ENCODE measurements at regions of chr5 and their contacts with region 1.

Region 1: GRCh38 chr5:54243473-54244080 is 66.8 kb downstream of the ARL15 start:
- DNase-seq: peak in 4 of 9 experiments; percentile 17 to 55 (median 41)
- ATAC-seq: no peak
- H3K4me3 ChIP-seq: no peak overlapping the region
- H3K4me3 Mint-ChIP-seq: no peak overlapping the region
- H3K27ac ChIP-seq: no peak overlapping the region
- H3K27ac Mint-ChIP-seq: no peak overlapping the region
- H3K4me1 ChIP-seq: no peaks in the 10 kb centered on the region
- H3K4me1 Mint-ChIP-seq: peaks cover 11% of the 10 kb centered on the region
- H3K27me3 ChIP-seq: no peaks in the 10 kb centered on the region
- H3K27me3 Mint-ChIP-seq: no peaks in the 10 kb centered on the region
- CTCF ChIP-seq: peak; percentile 76

Region 2: GRCh38 chr5:54254482-54255198 is 11.1 kb after region 1 on chr5:
- CTCF ChIA-PET with region 1: interaction called, 18 read pairs
- POLR2A ChIA-PET with region 1: no interaction called
- intact Hi-C with region 1: no loop called
- DNase-seq: no peak
- ATAC-seq: no peak
- H3K4me3 ChIP-seq: no peak overlapping the region
- H3K4me3 Mint-ChIP-seq: no peak overlapping the region
- H3K27ac ChIP-seq: no peak overlapping the region
- H3K27ac Mint-ChIP-seq: no peak overlapping the region
- H3K4me1 ChIP-seq: no peaks in the 10 kb centered on the region
- H3K4me1 Mint-ChIP-seq: peaks cover 37% of the 10 kb centered on the region
- H3K27me3 ChIP-seq: no peaks in the 10 kb centered on the region
- H3K27me3 Mint-ChIP-seq: no peaks in the 10 kb centered on the region
- CTCF ChIP-seq: no peak

Region 3: DNA sequence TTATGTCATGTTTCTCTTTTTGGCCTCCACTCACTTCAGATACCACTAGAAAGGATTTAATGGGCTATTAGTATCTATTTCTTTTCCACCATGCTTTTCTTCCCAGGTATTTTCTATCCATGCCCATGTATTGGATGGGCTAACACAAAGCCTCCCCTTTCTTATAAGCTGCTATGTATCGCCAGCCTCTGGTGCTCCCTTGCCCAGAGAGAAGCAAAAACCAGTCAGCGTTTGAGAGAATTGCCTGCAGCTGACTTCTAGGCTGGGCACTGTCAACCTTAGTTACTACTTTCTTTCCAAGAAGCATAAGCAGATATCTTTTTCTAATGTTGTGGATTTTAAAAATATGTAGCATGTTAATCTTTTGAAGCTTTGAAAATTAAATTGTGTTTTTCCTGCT is 181.7 kb after region 1 on chr5:
- CTCF ChIA-PET with region 1: interaction called, 24 read pairs
- POLR2A ChIA-PET with region 1: no interaction called
- intact Hi-C with region 1: no loop called
- DNase-seq: no peak
- ATAC-seq: no peak
- H3K4me3 ChIP-seq: no peak overlapping the region
- H3K4me3 Mint-ChIP-seq: no peak overlapping the region
- H3K27ac ChIP-seq: no peak overlapping the region
- H3K27ac Mint-ChIP-seq: no peak overlapping the region
- H3K4me1 ChIP-seq: no peaks in the 10 kb centered on the region
- H3K4me1 Mint-ChIP-seq: no peaks in the 10 kb centered on the region
- H3K27me3 ChIP-seq: peaks cover 0 to 3% of the 10 kb centered on the region in 2 experiments
- H3K27me3 Mint-ChIP-seq: peaks cover 19% of the 10 kb centered on the region
- CTCF ChIP-seq: no peak

Region 4: DNA sequence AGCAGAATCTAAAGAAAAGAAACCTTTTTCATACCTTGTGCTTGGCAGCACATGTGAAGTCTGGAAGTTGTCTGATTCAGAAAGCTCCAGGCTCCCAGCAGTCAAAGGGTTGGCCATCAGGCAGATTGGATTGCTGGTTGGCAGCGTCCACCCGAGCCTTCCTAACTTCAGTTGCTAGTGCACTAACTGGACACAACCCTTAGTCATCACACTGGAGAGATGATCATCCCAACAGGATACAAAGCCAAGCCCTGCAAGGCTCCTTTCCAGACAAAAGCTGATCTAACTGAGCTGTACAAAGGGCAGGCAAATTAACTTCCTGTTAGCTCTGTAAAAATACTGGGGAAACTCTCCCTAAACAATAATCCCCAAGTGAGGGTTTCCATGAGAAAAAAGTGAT is 459.6 kb after region 1 on chr5:
- CTCF ChIA-PET with region 1: no interaction called
- POLR2A ChIA-PET with region 1: no interaction called
- intact Hi-C with region 1: no loop called
- DNase-seq: no peak
- ATAC-seq: no peak
- H3K4me3 ChIP-seq: no peak overlapping the region
- H3K4me3 Mint-ChIP-seq: no peak overlapping the region
- H3K27ac ChIP-seq: no peak overlapping the region
- H3K27ac Mint-ChIP-seq: no peak overlapping the region
- H3K4me1 ChIP-seq: no peaks in the 10 kb centered on the region
- H3K4me1 Mint-ChIP-seq: peaks cover 2% of the 10 kb centered on the region
- H3K27me3 ChIP-seq: no peaks in the 10 kb centered on the region
- H3K27me3 Mint-ChIP-seq: no peaks in the 10 kb centered on the region
- CTCF ChIP-seq: no peak

Region 5: DNA sequence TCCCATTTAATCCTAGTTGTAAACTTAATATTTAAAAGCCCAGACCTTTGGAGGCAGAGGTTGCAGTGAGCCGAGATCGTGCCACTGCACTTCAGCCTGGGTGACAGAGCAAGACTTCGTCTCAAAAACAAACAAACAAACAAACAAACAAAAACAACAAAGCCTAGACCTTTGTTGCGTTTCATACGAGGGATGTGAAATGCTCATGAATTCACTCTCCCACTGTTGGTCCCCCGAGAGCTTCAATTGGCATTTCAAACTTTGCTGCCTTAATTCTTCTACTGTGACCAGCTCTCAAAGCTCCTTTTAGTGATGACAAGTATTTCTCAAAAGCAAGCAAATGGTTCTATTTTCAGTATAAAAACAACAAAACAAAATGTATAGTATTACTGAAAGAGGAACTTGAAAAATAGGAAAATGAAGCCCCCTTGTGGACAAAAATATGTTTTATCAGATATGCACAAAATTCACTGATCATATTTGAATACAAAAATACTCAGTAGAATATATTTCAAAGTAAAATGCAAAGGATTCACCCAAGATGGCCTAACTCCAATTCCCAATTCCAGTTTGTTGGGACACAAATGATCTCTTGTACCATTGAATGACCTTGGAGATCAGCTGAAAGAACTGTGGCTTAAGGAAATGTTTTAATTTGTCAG is 601.5 kb after region 1 on chr5:
- CTCF ChIA-PET with region 1: interaction called, 5 read pairs
- POLR2A ChIA-PET with region 1: no interaction called
- intact Hi-C with region 1: loop called in 1 of 2 experiments (anchors 5 kb)
- DNase-seq: peak in 2 of 9 experiments; percentile 59 to 70
- ATAC-seq: no peak
- H3K4me3 ChIP-seq: no peak overlapping the region
- H3K4me3 Mint-ChIP-seq: peak overlapping the region; percentile 55
- H3K27ac ChIP-seq: no peak overlapping the region
- H3K27ac Mint-ChIP-seq: peak overlapping the region; percentile 15
- H3K4me1 ChIP-seq: peaks cover 3% of the 10 kb centered on the region
- H3K4me1 Mint-ChIP-seq: peaks cover 3% of the 10 kb centered on the region
- H3K27me3 ChIP-seq: no peaks in the 10 kb centered on the region
- H3K27me3 Mint-ChIP-seq: peaks cover 9% of the 10 kb centered on the region
- CTCF ChIP-seq: peak; percentile 78